ENCODE measurements at regions of chr1 and their contacts with region 1.

Region 1: DNA sequence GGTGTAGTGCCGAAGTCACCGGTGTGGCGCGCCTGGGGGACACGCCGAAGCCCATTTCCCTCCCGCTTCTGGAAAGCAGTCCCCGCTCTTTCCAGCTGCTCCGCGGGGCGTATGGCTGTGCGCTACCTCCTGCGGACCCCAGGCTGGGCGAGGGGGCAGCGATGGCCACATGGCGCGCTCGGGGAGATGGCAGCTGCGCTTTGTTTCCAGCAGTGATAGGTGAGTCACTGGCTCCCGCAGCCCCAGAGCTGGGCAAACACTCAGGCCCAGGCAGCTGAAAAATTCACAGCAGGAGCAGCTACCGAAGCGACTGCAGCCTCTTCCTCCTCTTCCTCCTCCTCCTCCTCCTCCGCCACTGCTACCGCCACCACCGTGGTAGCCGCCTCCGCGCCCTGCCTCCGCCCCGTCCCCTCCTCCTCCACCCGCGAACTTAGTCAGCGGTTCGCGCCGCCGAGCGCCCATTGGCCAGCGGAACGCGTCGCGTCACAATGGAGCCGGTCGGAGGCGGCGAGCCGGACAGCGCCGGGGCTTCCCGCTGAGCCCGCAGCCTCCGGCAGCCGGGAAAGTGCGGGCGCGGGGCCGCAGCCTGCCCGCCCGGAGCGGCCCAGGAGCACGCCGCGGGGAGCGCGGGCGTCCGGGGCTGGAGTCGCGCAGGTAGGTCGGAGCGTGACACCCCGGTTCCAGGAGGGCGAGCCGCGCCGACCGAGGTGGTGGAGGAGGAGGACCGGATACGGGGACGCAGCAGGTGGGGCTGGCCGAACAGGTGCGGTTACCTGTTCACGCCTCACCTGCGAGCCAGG is at the start of gene LRRC8B:
- DNase-seq: peak; percentile 66
- ATAC-seq: peak; percentile 96
- H3K4me3 ChIP-seq: peak within 1 kb of the TSS; percentile 77 to 100 (median 89)
- H3K27ac ChIP-seq: peak within 1 kb of the TSS; percentile 84
- H3K4me1 ChIP-seq: peaks cover 47% of the 10 kb centered on the region
- H3K27me3 ChIP-seq: no peaks in the 10 kb centered on the region; a peak in 1 of 5 replicates
- CTCF ChIP-seq: 0 out of 2 replicates have a peak, but pooled peaks have one; percentile 11
- EP300 ChIP-seq: no peak
- POLR2A ChIP-seq: peak; percentile 87 to 92
- RAD21 ChIP-seq: no peak; the same call in 1 of the 2 replicates
- total RNA-seq, gene LRRC8B: 7.6 and 9.2 TPM in 2 replicates

Region 2: GRCh38 chr1:88891318-88891950 is 633.1 kb before region 1 on chr1 and contains the start of gene GTF2B:
- CTCF ChIA-PET with region 1: no interaction called
- POLR2A ChIA-PET with region 1: no interaction called
- in situ Hi-C with region 1: no loop called
- intact Hi-C with region 1: loop called (anchors 10 kb)
- DNase-seq: peak; percentile 89
- ATAC-seq: peak; percentile 73
- H3K4me3 ChIP-seq: peak within 1 kb of the TSS; percentile 84 to 96 (median 87)
- H3K27ac ChIP-seq: peak within 1 kb of the TSS; percentile 88
- H3K4me1 ChIP-seq: peaks cover 31% of the 10 kb centered on the region
- H3K27me3 ChIP-seq: no peaks in the 10 kb centered on the region; a peak in 1 of 5 replicates
- CTCF ChIP-seq: peak; percentile 5; the same call in 1 of the 2 replicates
- EP300 ChIP-seq: no peak
- POLR2A ChIP-seq: peak; percentile 99
- RAD21 ChIP-seq: peak; percentile 27; the same call in 1 of the 2 replicates
- total RNA-seq, gene GTF2B: 43.4 and 68.0 TPM in 2 replicates

Region 3: DNA sequence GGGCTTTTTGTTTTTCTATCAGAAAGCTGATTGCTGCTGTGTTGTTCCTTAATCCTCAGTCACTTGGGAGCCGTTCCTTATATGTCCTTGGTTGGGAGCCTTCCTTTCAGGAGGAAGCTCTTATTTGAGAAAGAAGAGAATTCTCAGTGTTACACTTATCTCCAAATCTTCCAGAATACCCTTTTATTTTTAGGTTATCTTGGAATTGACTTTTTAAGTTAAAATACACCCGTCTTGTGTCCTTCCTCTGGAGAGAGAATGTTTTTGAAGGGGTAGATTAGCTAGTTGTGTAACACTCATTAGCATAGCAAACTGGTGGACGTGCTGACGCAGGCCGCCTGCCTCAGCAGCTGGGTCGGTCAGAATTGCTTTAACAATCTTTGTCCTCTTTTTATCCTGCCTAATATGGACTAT is 42.2 kb after region 1 on chr1:
- CTCF ChIA-PET with region 1: no interaction called
- POLR2A ChIA-PET with region 1: no interaction called
- in situ Hi-C with region 1: no loop called
- intact Hi-C with region 1: loop called (anchors 5 kb)
- DNase-seq: no peak
- ATAC-seq: peak; percentile 58; the same call in 2 of the 3 replicates
- H3K4me3 ChIP-seq: no peak overlapping the region
- H3K27ac ChIP-seq: peak overlapping the region; percentile 2
- H3K4me1 ChIP-seq: peaks cover 28% of the 10 kb centered on the region
- H3K27me3 ChIP-seq: no peaks in the 10 kb centered on the region
- CTCF ChIP-seq: no peak
- EP300 ChIP-seq: no peak
- POLR2A ChIP-seq: no peak
- RAD21 ChIP-seq: no peak

Region 4: DNA sequence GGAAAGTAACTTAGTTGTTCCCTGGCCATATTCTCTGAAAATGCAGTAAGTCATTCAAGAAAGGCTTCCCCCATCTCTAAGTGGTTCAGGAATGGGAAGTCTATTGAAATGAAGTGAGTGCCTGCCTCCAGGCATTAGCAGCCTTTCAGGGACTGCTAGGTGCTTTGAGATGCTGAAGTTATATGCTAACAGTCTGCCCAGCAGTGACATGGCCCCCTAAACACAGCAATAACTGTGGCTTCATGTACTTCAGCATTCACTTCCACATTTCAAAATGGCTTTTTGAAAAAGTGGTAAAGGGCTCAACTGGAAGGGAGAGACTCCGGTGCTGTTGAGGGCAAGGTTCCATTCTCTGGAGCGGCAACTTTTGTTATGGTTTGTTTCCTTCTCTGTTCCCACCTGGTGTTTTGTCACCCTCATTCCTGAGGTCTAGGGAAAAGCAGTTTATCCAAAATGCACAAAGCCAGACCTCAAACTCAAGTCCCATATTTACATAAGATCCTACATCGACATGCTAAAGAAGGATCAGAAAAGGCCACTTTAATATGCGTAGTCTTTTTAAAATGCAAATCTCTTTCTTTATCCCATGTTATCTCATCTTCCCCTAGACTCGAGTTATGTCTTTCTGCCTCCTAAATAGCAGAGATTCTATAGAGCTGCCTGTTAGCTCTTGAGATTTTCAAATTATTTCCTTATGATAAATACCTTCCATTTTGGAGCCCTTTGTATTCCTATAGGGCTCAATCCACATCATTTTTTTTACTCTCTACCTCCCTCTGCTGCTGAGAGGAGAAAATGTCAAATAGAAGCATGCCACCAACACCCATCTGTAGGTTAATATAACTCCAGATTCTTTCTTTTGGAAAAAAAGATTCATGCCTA is 74.1 kb after region 1 on chr1:
- CTCF ChIA-PET with region 1: interaction called, 17 read pairs
- POLR2A ChIA-PET with region 1: interaction called, 3 read pairs
- in situ Hi-C with region 1: loop called (anchors 10 kb)
- intact Hi-C with region 1: loop called (anchors 1 kb)
- DNase-seq: peak; percentile 39
- ATAC-seq: peak; percentile 89
- H3K4me3 ChIP-seq: no peak overlapping the region
- H3K27ac ChIP-seq: no peak overlapping the region
- H3K4me1 ChIP-seq: peaks cover under 1% of the 10 kb centered on the region
- H3K27me3 ChIP-seq: no peaks in the 10 kb centered on the region
- CTCF ChIP-seq: peak; percentile 64
- EP300 ChIP-seq: no peak
- POLR2A ChIP-seq: no peak
- RAD21 ChIP-seq: peak; percentile 46; the same call in 1 of the 2 replicates

Region 5: DNA sequence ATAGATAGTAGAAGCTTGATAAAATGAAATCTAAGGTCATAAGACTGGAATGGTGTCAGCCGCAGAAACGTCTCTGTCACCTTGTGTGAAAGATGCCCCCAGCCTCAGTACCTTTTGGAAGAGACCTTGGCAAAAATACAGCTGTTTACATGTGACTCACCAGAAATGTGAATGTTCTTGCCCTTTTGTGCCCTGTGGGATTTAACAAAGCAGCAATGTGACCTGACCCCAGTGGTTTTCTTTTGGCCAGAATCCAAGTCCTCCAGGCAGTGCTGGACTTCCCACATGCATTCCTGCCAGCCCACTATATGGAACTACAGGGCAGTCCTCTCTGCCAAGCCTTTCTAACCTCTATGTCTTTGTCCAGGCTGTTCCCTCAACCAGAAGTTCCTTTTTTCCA is 81.1 kb after region 1 on chr1:
- CTCF ChIA-PET with region 1: interaction called, 17 read pairs
- POLR2A ChIA-PET with region 1: no interaction called
- in situ Hi-C with region 1: loop called (anchors 10 kb)
- intact Hi-C with region 1: no loop called
- DNase-seq: peak; percentile 75
- ATAC-seq: 0 out of 3 replicates have a peak, but pooled peaks have one; percentile 8
- H3K4me3 ChIP-seq: no peak overlapping the region
- H3K27ac ChIP-seq: no peak overlapping the region
- H3K4me1 ChIP-seq: peaks cover 30% of the 10 kb centered on the region
- H3K27me3 ChIP-seq: no peaks in the 10 kb centered on the region; a peak in 1 of 5 replicates
- CTCF ChIP-seq: no peak
- EP300 ChIP-seq: peak in 1 of 2 experiments; percentile 47; a peak in 2 of 4 replicates
- POLR2A ChIP-seq: no peak
- RAD21 ChIP-seq: no peak

Region 6: DNA sequence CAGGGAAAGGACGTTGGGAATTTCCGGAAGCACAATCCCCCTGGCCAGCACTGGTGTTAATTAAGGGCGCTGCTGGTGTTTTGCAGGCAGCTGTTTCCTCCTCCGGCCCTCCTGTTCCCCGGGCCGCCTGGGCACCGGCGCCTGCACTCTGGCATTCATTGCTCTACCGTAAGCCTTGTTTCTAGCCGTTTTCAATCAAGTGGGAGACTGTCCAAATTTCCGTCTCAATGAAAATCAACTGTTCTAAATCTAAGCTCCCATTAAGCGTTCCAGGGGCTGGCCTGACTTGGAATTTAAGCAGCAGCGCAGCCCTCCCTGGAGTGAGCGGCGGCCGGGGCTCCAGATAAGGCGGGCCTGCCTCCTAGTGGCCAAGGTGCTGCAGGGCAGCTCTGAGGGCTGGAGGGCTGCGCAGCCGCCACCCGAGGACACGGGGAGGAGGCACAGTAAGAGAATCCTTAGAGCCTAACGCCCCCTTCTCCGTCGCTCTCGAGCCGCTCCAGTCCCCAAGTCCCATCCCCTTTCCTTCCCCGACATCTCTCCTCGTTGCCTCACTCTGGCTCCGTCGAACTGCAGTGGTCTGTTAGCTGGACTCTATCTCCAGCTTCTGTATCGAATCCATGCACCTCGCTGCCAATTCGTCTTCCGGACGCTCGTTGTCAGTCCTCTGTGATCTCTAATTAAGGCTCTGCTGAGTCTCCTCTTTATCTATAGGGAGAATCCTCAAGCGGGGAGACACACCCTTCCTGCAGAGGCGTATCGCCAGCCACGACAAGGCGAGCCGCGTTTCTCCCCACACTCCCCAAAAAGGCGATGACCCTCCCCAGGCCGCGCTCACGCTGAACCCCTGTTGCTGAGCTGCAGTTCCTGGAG is 238.4 kb after region 1 on chr1:
- CTCF ChIA-PET with region 1: interaction called, 3 read pairs
- POLR2A ChIA-PET with region 1: no interaction called
- in situ Hi-C with region 1: no loop called
- intact Hi-C with region 1: loop called (anchors 2 kb)
- DNase-seq: peak; percentile 42
- ATAC-seq: peak; percentile 100
- H3K4me3 ChIP-seq: peak overlapping the region; percentile 31 to 73 (median 46); a peak in 5 of 6 replicates
- H3K27ac ChIP-seq: no peak overlapping the region
- H3K4me1 ChIP-seq: peaks cover 20% of the 10 kb centered on the region
- H3K27me3 ChIP-seq: peaks cover 8 to 38% of the 10 kb centered on the region in 2 experiments
- CTCF ChIP-seq: peak; percentile 98
- EP300 ChIP-seq: no peak
- POLR2A ChIP-seq: no peak
- RAD21 ChIP-seq: peak; percentile 90

Region 7: GRCh38 chr1:90650401-90650800 is 1125.8 kb after region 1 on chr1:
- CTCF ChIA-PET with region 1: no interaction called
- POLR2A ChIA-PET with region 1: no interaction called
- in situ Hi-C with region 1: no loop called
- intact Hi-C with region 1: loop called (anchors 5 kb)
- DNase-seq: no peak
- ATAC-seq: no peak
- H3K4me3 ChIP-seq: no peak overlapping the region
- H3K27ac ChIP-seq: no peak overlapping the region
- H3K4me1 ChIP-seq: no peaks in the 10 kb centered on the region
- H3K27me3 ChIP-seq: no peaks in the 10 kb centered on the region
- CTCF ChIP-seq: no peak
- EP300 ChIP-seq: no peak
- POLR2A ChIP-seq: no peak
- RAD21 ChIP-seq: no peak